ENCODE measurements at regions of chr4 and their contacts with region 1.

Region 1: GRCh38 chr4:139083956-139084803 is 68.6 kb downstream of the NOCT start:
- DNase-seq: peak; percentile 79
- ATAC-seq: peak; percentile 66
- H3K4me3 Mint-ChIP-seq: peak overlapping the region; percentile 99
- H3K27ac Mint-ChIP-seq: peak overlapping the region; percentile 99
- H3K4me1 Mint-ChIP-seq: peaks cover 38% of the 10 kb centered on the region
- H3K27me3 Mint-ChIP-seq: no peaks in the 10 kb centered on the region
- CTCF ChIP-seq: no peak

Region 2: DNA sequence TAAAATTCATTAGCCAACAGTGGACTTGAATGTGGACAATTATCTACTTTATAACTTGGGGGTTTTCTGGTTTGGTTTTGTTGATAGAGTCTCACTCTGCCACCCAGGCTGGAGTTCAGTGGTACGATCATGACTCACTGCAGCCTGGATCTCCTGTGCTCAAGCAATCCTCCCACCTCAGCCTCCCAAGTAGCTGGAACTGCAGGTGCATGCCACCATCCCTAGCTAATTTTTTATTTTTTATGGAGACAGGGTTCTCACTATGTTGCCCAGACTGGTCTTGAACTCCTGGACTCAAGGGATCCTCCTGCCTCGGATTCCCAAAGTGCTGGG is 105.2 kb after region 1 on chr4:
- CTCF ChIA-PET with region 1: no interaction called
- POLR2A ChIA-PET with region 1: interaction called, 16 read pairs
- intact Hi-C with region 1: no loop called
- DNase-seq: no peak
- ATAC-seq: no peak
- H3K4me3 Mint-ChIP-seq: no peak overlapping the region
- H3K27ac Mint-ChIP-seq: no peak overlapping the region
- H3K4me1 Mint-ChIP-seq: no peaks in the 10 kb centered on the region
- H3K27me3 Mint-ChIP-seq: no peaks in the 10 kb centered on the region
- CTCF ChIP-seq: no peak

Region 3: GRCh38 chr4:139361301-139361700 is 277.1 kb after region 1 on chr4:
- CTCF ChIA-PET with region 1: no interaction called
- POLR2A ChIA-PET with region 1: interaction called, 15 read pairs
- intact Hi-C with region 1: no loop called
- DNase-seq: no peak
- ATAC-seq: no peak
- H3K4me3 Mint-ChIP-seq: no peak overlapping the region
- H3K27ac Mint-ChIP-seq: no peak overlapping the region
- H3K4me1 Mint-ChIP-seq: no peaks in the 10 kb centered on the region
- H3K27me3 Mint-ChIP-seq: no peaks in the 10 kb centered on the region
- CTCF ChIP-seq: no peak

Region 4: GRCh38 chr4:140103676-140104075 is 1019.5 kb after region 1 on chr4:
- CTCF ChIA-PET with region 1: no interaction called
- POLR2A ChIA-PET with region 1: no interaction called
- intact Hi-C with region 1: no loop called
- DNase-seq: no peak
- ATAC-seq: peak; percentile 78
- H3K4me3 Mint-ChIP-seq: no peak overlapping the region
- H3K27ac Mint-ChIP-seq: no peak overlapping the region
- H3K4me1 Mint-ChIP-seq: peaks cover 34% of the 10 kb centered on the region
- H3K27me3 Mint-ChIP-seq: peaks cover 10% of the 10 kb centered on the region
- CTCF ChIP-seq: no peak